GM12878 (cell line): ENCODE measurements at regions of chr2 and their contacts with region 1.

Region 1: DNA sequence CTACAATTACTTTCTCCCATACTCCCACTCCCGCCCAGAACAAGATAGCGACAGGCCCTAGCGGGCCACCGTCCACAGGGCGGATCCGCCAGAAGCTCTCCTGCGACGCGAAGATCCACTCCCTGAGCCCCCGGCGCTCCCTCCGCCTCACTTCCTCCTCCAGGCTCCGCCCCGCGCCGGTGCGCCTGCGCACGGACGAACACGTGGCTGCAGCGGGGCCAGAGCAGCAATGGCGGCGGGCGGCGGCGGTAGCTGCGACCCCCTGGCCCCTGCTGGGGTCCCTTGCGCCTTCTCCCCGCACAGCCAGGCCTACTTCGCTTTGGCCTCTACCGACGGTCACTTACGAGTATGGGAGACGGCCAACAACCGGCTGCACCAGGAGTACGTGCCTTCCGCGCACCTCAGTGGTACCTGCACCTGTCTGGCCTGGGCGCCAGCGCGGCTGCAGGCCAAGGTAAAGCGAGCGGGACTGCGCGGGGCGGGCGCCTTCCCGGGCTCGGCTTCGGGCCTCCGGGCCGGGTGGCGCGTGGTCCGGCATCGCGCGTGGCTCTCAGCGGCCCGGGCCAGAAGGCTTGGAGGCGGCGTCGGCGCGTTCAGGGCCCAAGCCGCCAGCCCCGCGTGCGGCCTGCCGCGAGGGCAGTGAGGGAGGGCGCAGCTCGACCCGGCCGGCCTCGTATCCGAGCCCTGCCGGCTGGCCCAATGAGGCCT is at the start of gene WDR43:
- DNase-seq: peak; percentile 94
- ATAC-seq: peak; percentile 88
- H3K4me3 ChIP-seq: peak within 1 kb of the TSS; percentile 97
- H3K27ac ChIP-seq: peak within 1 kb of the TSS; percentile 88
- H3K4me1 ChIP-seq: no peaks in the 10 kb centered on the region
- H3K27me3 ChIP-seq: no peaks in the 10 kb centered on the region
- CTCF ChIP-seq: no peak
- EP300 ChIP-seq: peak in 1 of 2 experiments; percentile 32; a peak in 1 of 4 replicates
- POLR2A ChIP-seq: peak; percentile 97
- RAD21 ChIP-seq: no peak
- polyA plus RNA-seq, gene WDR43: 39.3 to 39.6 TPM

Region 2: GRCh38 chr2:28566521-28567041 is 328.0 kb before region 1 on chr2:
- CTCF ChIA-PET with region 1: no interaction called
- POLR2A ChIA-PET with region 1: no interaction called
- RAD21 ChIA-PET with region 1: no interaction called
- SMC1A ChIA-PET with region 1: no interaction called
- in situ Hi-C with region 1: no loop called
- intact Hi-C with region 1: loop called (anchors 5 kb)
- DNase-seq: peak; percentile 8
- ATAC-seq: peak; percentile 99
- H3K4me3 ChIP-seq: peak overlapping the region; percentile 87
- H3K27ac ChIP-seq: no peak overlapping the region
- H3K4me1 ChIP-seq: peaks cover 3% of the 10 kb centered on the region; the same call in 1 of the 2 replicates
- H3K27me3 ChIP-seq: no peaks in the 10 kb centered on the region; a peak in 1 of 4 replicates
- CTCF ChIP-seq: peak; percentile 98 to 100 (median 100); a peak in 5 of 6 replicates
- EP300 ChIP-seq: no peak
- POLR2A ChIP-seq: no peak
- RAD21 ChIP-seq: peak; percentile 91

Region 3: GRCh38 chr2:28751252-28751955 is 143.2 kb before region 1 on chr2 and contains the start of gene PPP1CB:
- CTCF ChIA-PET with region 1: no interaction called
- POLR2A ChIA-PET with region 1: interaction called, 3 read pairs
- RAD21 ChIA-PET with region 1: no interaction called
- SMC1A ChIA-PET with region 1: no interaction called
- in situ Hi-C with region 1: no loop called
- intact Hi-C with region 1: loop called (anchors 10 kb)
- DNase-seq: peak; percentile 87
- ATAC-seq: peak; percentile 91
- H3K4me3 ChIP-seq: peak within 1 kb of the TSS; percentile 98
- H3K27ac ChIP-seq: peak within 1 kb of the TSS; percentile 90
- H3K4me1 ChIP-seq: peaks cover 6% of the 10 kb centered on the region; the same call in 1 of the 2 replicates
- H3K27me3 ChIP-seq: no peaks in the 10 kb centered on the region
- CTCF ChIP-seq: peak; percentile 18 to 31 (median 27); a peak in 3 of 6 replicates
- EP300 ChIP-seq: peak in 1 of 2 experiments; percentile 21; a peak in 1 of 4 replicates
- POLR2A ChIP-seq: peak; percentile 85
- RAD21 ChIP-seq: no peak
- polyA plus RNA-seq, gene PPP1CB: 84.4 to 176 TPM

Region 4: GRCh38 chr2:28870146-28870891 is 24.3 kb before region 1 on chr2 and contains the start of gene TRMT61B:
- CTCF ChIA-PET with region 1: interaction called, 11 read pairs
- POLR2A ChIA-PET with region 1: interaction called, 13 read pairs
- RAD21 ChIA-PET with region 1: interaction called, 3 read pairs
- SMC1A ChIA-PET with region 1: interaction called, 8 read pairs
- in situ Hi-C with region 1: no loop called
- intact Hi-C with region 1: loop called (anchors 1 kb)
- DNase-seq: peak; percentile 92
- ATAC-seq: peak; percentile 99
- H3K4me3 ChIP-seq: peak within 1 kb of the TSS; percentile 76
- H3K27ac ChIP-seq: peak within 1 kb of the TSS; percentile 73
- H3K4me1 ChIP-seq: peaks cover 3% of the 10 kb centered on the region; the same call in 1 of the 2 replicates
- H3K27me3 ChIP-seq: no peaks in the 10 kb centered on the region
- CTCF ChIP-seq: no peak
- EP300 ChIP-seq: no peak
- POLR2A ChIP-seq: peak; percentile 97
- RAD21 ChIP-seq: no peak
- polyA plus RNA-seq, gene TRMT61B: 18.1 to 23.0 TPM